Calu3 (cell line): ENCODE measurements at regions of chr16 and their contacts with region 1.

Region 1: GRCh38 chr16:10181196-10182162 is 749 bp downstream of the GRIN2A start:
- DNase-seq: peak; percentile 93
- H3K4me3 Mint-ChIP-seq: peak overlapping the region; percentile 82
- H3K27ac Mint-ChIP-seq: no peak overlapping the region
- H3K4me1 Mint-ChIP-seq: peaks cover 41% of the 10 kb centered on the region
- H3K27me3 Mint-ChIP-seq: no peaks in the 10 kb centered on the region
- CTCF ChIP-seq: peak; percentile 98

Region 2: DNA sequence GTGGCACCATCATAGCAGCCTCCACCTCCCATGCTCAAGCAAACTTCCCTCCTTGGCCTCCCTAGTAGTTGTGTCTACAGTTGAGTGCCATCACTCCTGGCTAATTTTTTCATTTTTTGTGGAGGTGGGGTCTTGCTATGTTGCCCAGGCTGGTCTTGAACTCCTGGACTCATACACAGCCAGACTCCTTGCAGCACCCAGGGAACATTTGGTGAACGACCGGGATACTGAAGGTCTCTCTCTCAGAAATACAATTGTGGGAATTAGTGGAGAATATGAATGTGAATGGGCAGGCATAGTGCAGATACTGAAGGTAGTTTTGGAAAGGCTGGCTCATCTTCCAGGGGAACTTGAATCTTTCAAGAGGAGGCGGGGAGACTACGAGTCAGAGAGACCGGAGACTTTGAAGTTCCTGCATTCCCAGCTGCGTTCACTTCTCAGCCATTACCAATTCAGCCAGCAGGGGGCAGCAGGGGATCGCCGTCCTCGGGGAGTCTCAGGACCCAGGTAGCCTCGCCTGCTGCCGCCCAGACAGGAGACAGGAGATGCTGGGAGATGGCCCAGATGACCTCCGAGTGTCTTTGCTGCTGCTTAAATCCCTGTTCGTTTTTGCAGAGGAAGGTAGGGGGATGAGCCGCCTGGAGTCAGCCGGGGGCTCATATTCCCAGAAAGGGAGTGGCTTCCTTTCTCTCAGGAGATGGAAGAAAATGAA is 1021.5 kb before region 1 on chr16:
- CTCF ChIA-PET with region 1: no interaction called
- intact Hi-C with region 1: loop called (anchors 2 kb)
- DNase-seq: peak; percentile 89
- H3K4me3 Mint-ChIP-seq: no peak overlapping the region
- H3K27ac Mint-ChIP-seq: no peak overlapping the region
- H3K4me1 Mint-ChIP-seq: no peaks in the 10 kb centered on the region
- H3K27me3 Mint-ChIP-seq: peaks cover 7% of the 10 kb centered on the region
- CTCF ChIP-seq: peak; percentile 90

Region 3: DNA sequence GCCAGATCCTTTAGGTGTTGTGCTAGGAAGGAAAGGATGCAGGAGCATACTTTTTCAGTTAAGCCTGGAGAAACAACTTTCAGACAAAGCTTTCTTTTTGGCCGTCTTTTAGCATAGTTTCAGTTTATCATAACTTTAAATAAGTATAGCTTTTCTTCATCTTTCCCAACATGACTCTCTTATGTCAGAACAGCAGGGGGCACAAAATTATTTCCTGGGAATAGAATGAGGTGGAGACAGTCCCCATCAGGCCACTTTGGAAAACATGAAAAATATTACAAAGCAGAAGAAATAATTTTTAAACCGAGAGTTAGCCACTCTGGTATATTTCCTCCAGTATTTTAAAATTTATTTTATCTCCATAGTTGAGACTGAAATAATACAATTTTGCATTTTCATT is 702.5 kb before region 1 on chr16:
- CTCF ChIA-PET with region 1: interaction called, 3 read pairs
- intact Hi-C with region 1: loop called (anchors 10 kb)
- DNase-seq: no peak
- H3K4me3 Mint-ChIP-seq: no peak overlapping the region
- H3K27ac Mint-ChIP-seq: no peak overlapping the region
- H3K4me1 Mint-ChIP-seq: no peaks in the 10 kb centered on the region
- H3K27me3 Mint-ChIP-seq: no peaks in the 10 kb centered on the region
- CTCF ChIP-seq: no peak

Region 4: DNA sequence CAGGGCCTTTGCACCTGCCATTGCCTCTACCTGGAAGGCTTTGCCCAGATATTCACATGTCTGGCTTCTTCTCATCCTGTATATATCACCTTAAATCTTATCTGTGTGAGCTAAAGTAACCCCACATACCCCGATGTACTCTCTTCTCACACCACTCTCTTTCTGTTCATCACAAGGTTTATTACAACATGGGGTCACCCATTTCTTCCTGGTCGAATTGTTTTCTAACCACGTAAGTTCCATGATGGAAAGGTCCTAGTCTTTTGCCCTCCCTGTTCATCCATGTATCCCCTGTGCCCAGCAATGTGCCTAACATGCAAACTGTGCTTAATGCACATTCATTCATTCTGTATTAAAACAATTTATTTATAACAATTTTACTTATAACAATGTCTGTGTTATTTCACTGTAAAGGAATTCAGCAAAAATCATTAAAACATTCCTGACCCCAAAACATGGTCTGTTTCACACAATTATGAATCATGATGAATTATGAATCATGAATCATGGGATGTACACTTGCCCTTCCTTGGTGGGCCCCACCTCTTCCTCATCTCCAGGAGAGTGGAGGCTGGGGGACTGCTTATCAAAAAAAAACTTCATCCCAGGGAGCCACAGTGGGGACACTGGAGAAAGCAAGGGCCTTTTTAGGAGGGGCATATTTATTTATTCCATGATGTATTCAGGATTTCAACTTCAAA is 335.7 kb before region 1 on chr16:
- CTCF ChIA-PET with region 1: interaction called, 3 read pairs
- intact Hi-C with region 1: loop called (anchors 5 kb)
- DNase-seq: peak; percentile 72
- H3K4me3 Mint-ChIP-seq: peak overlapping the region; percentile 48
- H3K27ac Mint-ChIP-seq: peak overlapping the region; percentile 99
- H3K4me1 Mint-ChIP-seq: peaks cover 51% of the 10 kb centered on the region
- H3K27me3 Mint-ChIP-seq: no peaks in the 10 kb centered on the region
- CTCF ChIP-seq: no peak

Region 5: DNA sequence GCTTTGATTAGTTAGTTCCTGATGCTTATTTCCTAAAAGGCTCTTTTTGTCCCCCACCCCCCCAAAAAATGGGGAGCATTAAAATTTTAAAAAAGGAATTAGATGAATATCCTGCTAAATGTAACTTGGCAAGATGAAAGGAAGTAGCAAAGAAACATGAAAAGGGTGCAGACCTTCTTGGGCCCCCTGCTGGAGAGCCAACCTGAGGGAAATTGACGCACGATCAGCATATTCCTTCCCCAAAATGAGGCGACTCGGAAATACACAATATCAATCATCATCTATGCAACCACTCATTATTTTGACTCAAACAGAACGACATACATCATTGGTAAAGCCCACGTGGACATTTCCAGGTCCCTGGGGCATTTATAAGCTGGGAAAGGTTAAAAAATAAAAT is 58.9 kb before region 1 on chr16:
- CTCF ChIA-PET with region 1: interaction called, 5 read pairs
- intact Hi-C with region 1: loop called (anchors 5 kb)
- DNase-seq: peak; percentile 72
- H3K4me3 Mint-ChIP-seq: peak overlapping the region; percentile 46
- H3K27ac Mint-ChIP-seq: peak overlapping the region; percentile 83
- H3K4me1 Mint-ChIP-seq: peaks cover 68% of the 10 kb centered on the region
- H3K27me3 Mint-ChIP-seq: no peaks in the 10 kb centered on the region
- CTCF ChIP-seq: peak; percentile 69